Posterior cingulate gyrus (tissue), 11 donors: ENCODE measurements at regions of chr3 and their contacts with region 1.

Region 1: DNA sequence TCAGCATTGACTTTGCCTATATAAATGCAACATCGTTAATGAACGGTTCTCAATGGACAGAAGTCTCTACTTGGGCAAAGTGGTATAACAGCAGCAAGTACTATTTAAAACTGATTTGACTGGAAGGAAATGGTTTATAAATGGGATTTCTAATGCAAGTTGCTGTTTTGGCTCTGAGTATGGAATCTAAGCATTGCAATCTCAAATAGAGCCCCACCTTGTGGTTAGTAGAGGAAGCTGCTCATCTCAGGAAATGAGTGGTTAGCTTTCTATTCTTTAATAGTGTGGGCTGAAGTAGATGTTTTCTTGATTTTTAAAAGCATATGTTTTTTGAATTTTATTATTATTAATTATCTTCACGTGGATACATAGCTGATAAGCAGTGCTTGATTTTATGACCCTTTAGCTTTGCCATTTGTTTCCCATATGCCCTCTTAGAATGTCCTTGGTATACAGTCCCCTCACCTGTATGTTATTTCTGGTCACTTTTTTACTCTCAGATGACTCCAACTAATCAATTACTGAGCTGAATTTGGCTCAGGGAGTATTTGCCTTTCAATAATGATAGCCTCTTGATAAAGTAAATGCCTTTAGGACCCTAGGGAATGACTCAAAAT is 67.1 kb downstream of the OXSM start:
- DNase-seq: no peak

Region 2: GRCh38 chr3:25648107-25648535 is 208.9 kb before region 1 on chr3:
- intact Hi-C with region 1: loop called (anchors 1 kb)
- DNase-seq: peak in 6 of 10 donors; percentile 22 to 75 (median 67)

Region 3: DNA sequence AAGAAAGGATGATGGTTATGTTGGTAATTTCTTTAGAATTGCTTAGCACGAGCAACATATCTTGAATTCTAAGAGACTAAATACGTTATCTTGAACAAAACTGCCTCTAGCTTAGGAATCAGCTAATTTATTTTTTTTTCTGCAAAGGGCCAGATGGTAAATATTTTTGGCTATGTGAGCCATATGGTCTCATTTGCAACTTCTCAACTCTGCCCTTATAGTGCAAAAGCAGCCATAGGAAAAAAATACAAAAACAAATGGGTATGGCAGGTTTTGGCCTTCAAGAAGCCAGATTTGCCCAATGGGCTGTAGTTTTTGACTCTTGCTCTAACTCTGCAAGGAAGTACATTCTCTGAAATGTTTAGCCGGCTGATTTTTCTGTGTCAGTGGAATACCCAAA is 55.2 kb before region 1 on chr3:
- intact Hi-C with region 1: no loop called
- DNase-seq: no peak

Region 4: GRCh38 chr3:25812644-25813043 is 44.4 kb before region 1 on chr3:
- intact Hi-C with region 1: no loop called
- DNase-seq: no peak

Region 5: GRCh38 chr3:26091096-26091495 is 234.1 kb after region 1 on chr3:
- intact Hi-C with region 1: no loop called
- DNase-seq: no peak